Posterior cingulate gyrus (tissue), 11 donors: ENCODE measurements at regions of chr18 and their contacts with region 1.

Region 1: GRCh38 chr18:21612125-21612991 is at the start of gene SNRPD1:
- DNase-seq: peak; percentile 75 to 97 (median 84)

Region 2: GRCh38 chr18:21391074-21391673 is 221.2 kb before region 1 on chr18:
- intact Hi-C with region 1: no loop called
- DNase-seq: no peak

Region 3: DNA sequence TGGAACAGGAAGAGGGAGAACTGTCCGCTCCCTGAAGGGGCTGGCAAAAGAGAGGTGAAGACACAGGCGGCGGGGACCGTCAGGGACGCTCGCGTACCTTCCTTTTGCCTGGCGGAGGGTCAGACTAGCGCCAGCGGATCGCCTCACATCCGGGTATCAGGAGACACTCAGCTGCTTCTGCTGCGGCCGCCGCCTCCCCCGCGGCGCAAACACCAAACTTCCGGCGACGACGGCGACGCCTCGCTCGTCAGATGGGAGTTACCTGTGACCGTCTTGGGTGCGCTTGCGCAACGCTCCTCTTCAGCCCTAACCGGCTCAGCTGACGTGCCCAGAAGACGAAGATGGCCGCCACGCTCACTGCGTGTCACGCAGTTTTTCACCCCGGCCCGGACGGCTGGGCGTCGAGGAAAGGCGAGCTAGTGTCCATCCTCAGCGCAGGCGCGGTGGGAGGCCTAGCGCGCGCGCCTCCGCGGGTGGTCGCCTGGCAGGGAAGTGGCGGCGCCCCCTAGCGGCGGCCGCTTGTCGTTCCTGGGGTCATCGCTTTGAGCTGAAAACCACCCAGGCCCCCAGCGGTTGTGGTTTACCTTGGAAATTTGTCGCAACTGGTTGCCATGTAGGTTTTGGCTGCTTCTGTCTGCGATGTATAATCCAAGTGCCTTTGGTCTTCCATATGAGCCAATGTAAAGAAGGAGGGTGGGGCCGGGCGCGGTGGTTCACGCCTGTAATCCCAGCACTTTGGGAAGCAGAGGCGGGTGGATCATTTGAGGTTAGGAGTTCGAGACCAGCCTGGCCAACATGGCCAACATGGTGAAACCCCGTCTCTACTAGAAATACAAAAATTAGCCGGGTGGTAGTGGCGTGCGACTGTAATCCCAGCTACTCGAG is 11.6 kb before region 1 on chr18 and contains the start of gene ESCO1:
- intact Hi-C with region 1: loop called (anchors 2 kb)
- DNase-seq: peak; percentile 83 to 99 (median 89)

Region 4: DNA sequence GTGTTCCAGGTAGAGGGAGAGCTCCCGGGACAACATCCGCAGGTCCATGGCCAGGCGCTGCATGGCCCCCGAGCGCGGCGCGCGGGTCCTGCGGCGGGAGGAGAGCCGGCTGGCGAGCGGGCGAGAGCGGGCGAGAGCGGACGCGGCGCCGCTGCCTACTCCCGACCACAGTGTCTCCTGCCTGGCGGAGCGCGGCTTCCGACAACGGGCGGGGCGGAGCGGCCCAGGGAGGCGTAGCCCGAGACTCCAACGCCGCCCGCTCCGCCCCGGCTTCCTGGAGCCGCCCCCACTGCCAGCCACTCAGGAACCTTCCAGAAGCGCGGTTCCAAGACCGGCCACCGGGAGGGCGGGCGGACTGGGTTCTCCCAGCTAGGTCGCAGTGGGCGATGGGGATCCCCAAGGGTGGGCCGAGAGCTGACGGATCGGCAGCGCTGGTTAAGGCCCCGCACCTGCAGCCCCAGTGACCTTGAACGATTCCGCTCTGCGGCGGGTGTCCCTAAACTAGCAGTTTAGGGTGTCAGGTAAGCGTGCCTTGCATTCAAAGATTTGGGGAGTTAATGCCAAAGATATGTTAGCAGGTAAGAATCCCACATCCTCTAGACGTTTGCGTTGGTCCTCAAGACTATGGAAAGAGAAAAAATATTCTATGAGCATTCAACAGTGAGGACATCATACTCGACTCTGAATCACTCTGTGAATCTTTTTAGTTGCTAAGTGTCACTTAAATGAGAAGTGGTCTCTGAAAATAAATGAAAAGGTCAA is 92.4 kb after region 1 on chr18 and contains the start of gene ABHD3:
- intact Hi-C with region 1: loop called (anchors 5 kb)
- DNase-seq: peak; percentile 83 to 98 (median 90)

Region 5: GRCh38 chr18:21831413-21831831 is 219.1 kb after region 1 on chr18:
- intact Hi-C with region 1: loop called (anchors 10 kb)
- DNase-seq: peak in 4 of 10 donors; percentile 8 to 78 (median 18)